GM10248 (cell line): ENCODE measurements at regions of chr9 and their contacts with region 1.

Region 1: GRCh38 chr9:94002316-94003140 is 47.4 kb upstream of the BARX1 start:
- DNase-seq: peak; percentile 47
- CTCF ChIP-seq: peak; percentile 71

Region 2: DNA sequence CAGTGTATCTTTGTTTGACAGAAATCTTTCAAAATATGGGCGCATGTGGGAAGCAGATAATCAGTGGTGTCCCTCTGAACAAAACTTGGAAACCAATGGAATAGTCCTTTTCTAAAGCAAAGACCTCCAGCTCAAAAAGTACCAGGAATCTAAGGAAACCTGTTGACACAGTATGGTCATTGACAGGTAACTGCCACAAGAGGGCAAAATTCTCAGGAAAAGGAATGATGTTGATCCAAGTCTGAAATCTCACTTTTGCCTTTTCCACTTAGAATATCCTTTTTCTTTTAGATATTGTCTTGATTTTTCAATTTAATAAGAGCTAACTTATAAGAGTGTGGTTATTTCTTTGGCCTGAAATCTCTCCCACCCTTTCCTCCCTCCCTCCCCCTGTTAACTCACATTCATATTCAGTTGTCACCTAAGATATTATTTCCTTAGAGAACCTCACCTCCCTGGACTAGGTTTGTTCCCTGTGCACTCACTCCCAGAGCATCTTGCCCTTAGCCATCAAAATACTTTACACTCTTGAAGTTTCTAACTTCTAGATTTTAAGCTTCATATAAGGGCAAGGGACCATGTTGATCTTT is 11.6 kb after region 1 on chr9:
- CTCF ChIA-PET with region 1: interaction called, 83 read pairs
- POLR2A ChIA-PET with region 1: no interaction called
- DNase-seq: peak; percentile 37
- CTCF ChIP-seq: peak; percentile 65

Region 3: DNA sequence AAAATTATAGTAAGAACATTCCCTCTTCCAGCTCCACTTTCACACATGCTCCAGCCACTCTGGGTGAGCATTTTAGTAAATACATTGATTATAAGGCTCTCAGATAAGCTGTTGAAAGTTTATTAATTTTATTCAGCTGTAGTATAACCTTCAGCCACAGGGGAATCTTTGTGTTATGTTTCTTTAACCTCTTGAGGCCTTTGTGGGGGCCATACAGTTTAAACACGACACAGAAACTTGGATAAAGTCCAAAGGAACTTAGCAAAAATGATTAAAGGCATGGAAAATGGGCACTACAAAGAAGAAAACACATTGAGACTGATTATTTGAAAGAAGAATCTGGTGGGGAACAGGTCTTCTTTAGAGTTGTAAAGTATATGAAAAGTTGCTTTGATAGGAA is 794.2 kb after region 1 on chr9:
- CTCF ChIA-PET with region 1: no interaction called
- POLR2A ChIA-PET with region 1: no interaction called
- DNase-seq: no peak
- CTCF ChIP-seq: no peak